MCF 10A (cell line): ENCODE measurements at regions of chr4 and their contacts with region 1.

Region 1: GRCh38 chr4:52861879-52862616 is at the start of gene RASL11B:
- DNase-seq: peak; percentile 80
- H3K4me3 Mint-ChIP-seq: peak within 1 kb of the TSS; percentile 81
- H3K27ac Mint-ChIP-seq: no peak within 1 kb of the TSS
- H3K4me1 Mint-ChIP-seq: peaks cover 16% of the 10 kb centered on the region
- H3K27me3 Mint-ChIP-seq: no peaks in the 10 kb centered on the region
- CTCF ChIP-seq: no peak
- total RNA-seq, gene RASL11B: 1.7 and 2.6 TPM in 2 replicates

Region 2: DNA sequence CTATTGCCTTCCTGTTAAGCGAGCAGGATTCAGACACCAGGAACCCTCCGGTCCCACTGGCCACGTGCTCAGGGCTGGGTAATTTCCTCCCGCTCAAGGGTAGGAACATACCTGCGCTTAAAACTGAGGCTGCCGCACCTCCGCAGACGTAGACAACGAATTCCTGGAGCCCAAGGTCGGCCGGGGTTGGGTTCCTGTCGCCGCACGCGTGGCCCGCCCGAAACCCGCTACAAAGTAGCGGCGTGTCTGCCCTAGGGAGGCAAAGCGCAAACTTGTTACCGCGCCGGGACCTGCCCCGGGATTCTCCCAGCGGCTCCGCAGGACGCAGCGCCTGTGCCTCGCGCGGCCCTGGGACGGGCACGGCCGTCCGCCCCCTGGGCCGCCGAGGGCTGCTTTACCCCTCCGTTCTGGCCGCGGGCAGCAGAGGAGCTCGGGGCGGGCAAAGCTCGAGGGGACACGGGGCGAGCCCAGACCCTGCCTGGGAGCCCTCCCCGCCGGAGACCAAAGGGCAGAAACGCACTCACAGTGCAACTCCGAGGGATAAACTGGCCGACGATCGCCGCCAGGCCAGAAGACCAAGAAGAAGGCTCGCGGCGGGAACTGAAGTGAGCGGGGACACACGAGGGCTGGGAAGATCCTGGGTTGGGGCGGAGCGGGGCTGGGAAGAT is 111.1 kb before region 1 on chr4 and contains the start of gene ERVMER34-1:
- CTCF ChIA-PET with region 1: no interaction called
- POLR2A ChIA-PET with region 1: no interaction called
- intact Hi-C with region 1: loop called (anchors 2 kb)
- DNase-seq: peak; percentile 29
- H3K4me3 Mint-ChIP-seq: peak within 1 kb of the TSS; percentile 81
- H3K27ac Mint-ChIP-seq: peak within 1 kb of the TSS; percentile 81
- H3K4me1 Mint-ChIP-seq: no peaks in the 10 kb centered on the region
- H3K27me3 Mint-ChIP-seq: no peaks in the 10 kb centered on the region
- CTCF ChIP-seq: no peak
- total RNA-seq, gene ERVMER34-1: 6.2 and 6.7 TPM in 2 replicates

Region 3: GRCh38 chr4:52824603-52825459 is 37.2 kb before region 1 on chr4:
- CTCF ChIA-PET with region 1: no interaction called
- POLR2A ChIA-PET with region 1: interaction called, 5 read pairs
- intact Hi-C with region 1: loop called (anchors 5 kb)
- DNase-seq: no peak
- H3K4me3 Mint-ChIP-seq: no peak overlapping the region
- H3K27ac Mint-ChIP-seq: peak overlapping the region; percentile 92
- H3K4me1 Mint-ChIP-seq: peaks cover 38% of the 10 kb centered on the region
- H3K27me3 Mint-ChIP-seq: no peaks in the 10 kb centered on the region
- CTCF ChIP-seq: no peak